ENCODE measurements at regions of chr9 and their contacts with region 1.

Region 1: DNA sequence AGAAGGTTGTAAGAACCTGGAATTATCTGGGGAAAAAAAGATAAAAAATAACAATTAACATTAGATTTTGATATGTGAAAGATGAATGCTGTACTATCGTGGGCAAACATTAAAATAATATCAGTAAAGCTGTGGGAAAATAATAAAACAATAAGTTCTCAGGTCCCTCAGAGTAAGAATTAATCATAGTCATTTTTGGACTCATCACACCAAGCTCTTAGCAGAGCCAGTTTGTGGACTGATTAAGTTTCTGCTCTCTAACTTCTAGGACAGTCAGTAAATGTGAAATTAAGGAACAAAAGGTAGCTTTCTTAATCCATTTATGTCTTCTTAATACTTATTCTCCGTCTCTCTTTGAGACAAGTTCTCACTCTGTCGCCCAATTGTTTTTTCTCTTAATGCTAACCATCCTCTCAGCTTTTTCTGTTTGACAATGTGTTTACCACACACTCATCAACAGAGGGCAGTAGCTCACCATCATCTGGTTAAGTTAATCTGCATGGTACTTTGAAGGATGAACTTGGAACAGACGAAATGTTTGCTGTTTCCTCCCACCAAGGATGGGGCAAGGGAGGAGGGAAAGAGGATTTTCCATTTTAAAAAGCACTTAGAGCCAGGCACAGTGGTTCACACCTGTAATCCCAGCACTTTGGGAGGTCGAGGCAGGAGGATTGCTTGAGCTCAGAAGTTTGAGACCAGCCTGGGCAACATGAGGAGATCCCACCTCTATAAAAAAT is 5.3 kb upstream of the ACO1 start:
- DNase-seq: peak in 1 of 2 donors; percentile 47
- ATAC-seq: peak; percentile 72 to 91 (median 82)
- H3K4me3 ChIP-seq: no peak overlapping the region
- H3K27ac ChIP-seq: no peak overlapping the region
- H3K4me1 ChIP-seq: peaks cover 0 to 19% (median 6%) of the 10 kb centered on the region in 9 donors
- H3K27me3 ChIP-seq: peaks cover 0 to 13% (median 0%) of the 10 kb centered on the region in 7 donors
- CTCF ChIP-seq: peak; percentile 62 to 92 (median 81)

Region 2: DNA sequence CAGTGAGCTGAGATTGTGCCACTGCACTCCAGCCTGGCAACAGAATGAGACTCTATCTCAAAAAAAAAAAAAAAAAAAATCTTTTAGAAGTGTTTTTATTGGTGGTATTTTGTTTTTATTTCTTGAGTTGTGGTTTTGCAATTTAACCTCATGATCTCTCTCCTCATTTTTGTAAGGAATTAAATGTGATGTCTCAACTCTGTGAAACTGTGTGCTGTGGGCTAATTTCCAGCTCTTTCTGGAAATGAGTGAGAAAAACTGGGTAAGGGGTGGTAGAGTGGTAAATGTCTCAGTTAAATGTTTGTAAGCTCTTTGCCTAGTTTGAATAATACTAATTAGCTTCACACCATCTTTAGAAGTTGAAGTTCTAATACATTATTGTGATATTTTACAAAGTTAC is 34.3 kb after region 1 on chr9:
- intact Hi-C with region 1: no loop called
- DNase-seq: no peak
- ATAC-seq: no peak
- H3K4me3 ChIP-seq: no peak overlapping the region
- H3K27ac ChIP-seq: no peak overlapping the region
- H3K4me1 ChIP-seq: no peaks in the 10 kb centered on the region
- H3K27me3 ChIP-seq: no peaks in the 10 kb centered on the region
- CTCF ChIP-seq: no peak

Region 3: GRCh38 chr9:32431940-32432555 is 52.9 kb after region 1 on chr9:
- intact Hi-C with region 1: loop called (anchors 2 to 5 kb)
- DNase-seq: peak; percentile 23 to 28
- ATAC-seq: peak in 6 of 8 donors; percentile 55 to 71 (median 63)
- H3K4me3 ChIP-seq: no peak overlapping the region
- H3K27ac ChIP-seq: no peak overlapping the region
- H3K4me1 ChIP-seq: peaks cover 0 to 3% (median 0%) of the 10 kb centered on the region in 9 donors
- H3K27me3 ChIP-seq: no peaks in the 10 kb centered on the region
- CTCF ChIP-seq: peak; percentile 8 to 70 (median 58)

Region 4: DNA sequence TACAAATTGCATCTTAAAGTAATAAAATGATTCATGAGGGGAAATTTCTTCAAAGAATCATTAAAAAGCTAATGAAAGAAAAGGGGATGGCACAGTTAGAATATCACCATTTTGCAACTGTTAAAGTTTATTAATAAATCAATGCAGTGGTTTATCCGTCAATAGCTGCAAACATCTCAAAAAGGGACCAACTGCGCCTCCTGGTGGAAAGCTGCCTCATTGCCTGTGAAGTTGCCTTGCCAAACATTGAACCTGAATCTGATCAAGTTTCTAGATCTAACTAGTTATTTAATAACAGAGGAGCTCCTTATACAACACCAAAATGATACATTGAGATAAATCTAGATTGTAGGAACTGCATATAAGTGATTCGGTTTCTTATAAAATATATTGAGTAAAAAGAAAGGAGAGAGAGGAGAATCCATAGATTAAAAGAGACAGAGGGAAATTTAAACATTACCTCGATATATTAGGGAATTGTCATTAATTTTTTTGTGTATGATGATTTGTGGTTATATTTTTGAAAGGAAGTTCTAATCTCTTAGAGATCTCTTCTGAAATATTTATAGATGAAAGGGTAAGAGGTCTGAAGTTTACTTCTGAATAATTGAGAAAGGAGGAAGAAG is 200.7 kb after region 1 on chr9:
- intact Hi-C with region 1: loop called in 9 of 10 experiments (anchors 1 to 5 kb)
- DNase-seq: peak; percentile 60 to 67
- ATAC-seq: peak in 1 of 8 donors; percentile 57
- H3K4me3 ChIP-seq: peak overlapping the region in 1 of 10 donors; percentile 11
- H3K27ac ChIP-seq: no peak overlapping the region
- H3K4me1 ChIP-seq: peaks cover 0 to 4% (median 0%) of the 10 kb centered on the region in 9 donors
- H3K27me3 ChIP-seq: peaks cover 0 to 28% (median 3%) of the 10 kb centered on the region in 7 donors
- CTCF ChIP-seq: peak; percentile 87 to 97 (median 92)

Region 5: GRCh38 chr9:32823551-32823950 is 444.4 kb after region 1 on chr9:
- intact Hi-C with region 1: no loop called
- DNase-seq: no peak
- ATAC-seq: no peak
- H3K4me3 ChIP-seq: no peak overlapping the region
- H3K27ac ChIP-seq: no peak overlapping the region
- H3K4me1 ChIP-seq: no peaks in the 10 kb centered on the region
- H3K27me3 ChIP-seq: peaks cover 0 to 4% (median 0%) of the 10 kb centered on the region in 7 donors
- CTCF ChIP-seq: no peak

Measured in heart right ventricle (tissue), 16 donors.